Heart right ventricle (tissue), 16 donors: ENCODE measurements at regions of chr1 and their contacts with region 1.

Region 1: GRCh38 chr1:231806623-231807495 is 180.3 kb downstream of the DISC1 start:
- DNase-seq: peak in 1 of 2 donors; percentile 51
- ATAC-seq: peak; percentile 67 to 84 (median 78)
- H3K4me3 ChIP-seq: no peak overlapping the region
- H3K27ac ChIP-seq: no peak overlapping the region
- H3K4me1 ChIP-seq: peaks cover 2 to 33% (median 13%) of the 10 kb centered on the region in 9 donors
- H3K27me3 ChIP-seq: no peaks in the 10 kb centered on the region
- CTCF ChIP-seq: peak; percentile 26 to 71 (median 59)

Region 2: DNA sequence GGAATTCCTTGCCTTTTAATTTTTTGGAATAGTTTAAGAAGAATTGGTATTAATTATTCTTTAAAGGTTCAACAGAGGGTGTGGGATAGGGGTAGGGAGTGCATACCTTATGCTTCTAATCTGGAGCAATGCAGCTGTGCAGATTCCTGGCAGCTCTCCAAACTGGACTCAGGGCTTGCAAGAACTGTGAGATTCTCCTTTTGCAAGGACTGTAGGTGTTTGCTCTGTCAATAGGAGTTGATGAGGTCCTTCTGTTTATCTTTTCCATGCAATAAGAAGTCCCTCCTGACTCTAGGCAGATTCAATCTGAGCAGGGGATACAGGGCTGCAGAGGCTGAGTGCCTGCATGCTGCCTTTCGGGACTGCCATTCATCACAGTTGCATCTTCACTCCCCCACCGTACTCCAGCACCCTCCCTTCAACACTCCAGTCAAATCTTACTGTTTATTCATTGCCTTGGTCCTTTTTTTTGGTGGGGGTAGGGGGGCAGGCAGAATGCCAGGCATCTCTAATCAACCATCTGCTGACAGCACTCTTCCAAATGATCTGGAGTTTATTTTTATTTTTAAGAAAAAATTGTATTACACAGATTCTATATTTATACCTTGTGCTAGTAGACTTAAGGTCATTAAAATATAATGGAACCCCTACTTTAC is 58.0 kb before region 1 on chr1:
- intact Hi-C with region 1: loop called in 1 of 10 experiments (anchors 10 kb)
- DNase-seq: no peak
- ATAC-seq: peak in 1 of 8 donors; percentile 12
- H3K4me3 ChIP-seq: no peak overlapping the region
- H3K27ac ChIP-seq: no peak overlapping the region
- H3K4me1 ChIP-seq: peaks cover 0 to 17% (median 4%) of the 10 kb centered on the region in 9 donors
- H3K27me3 ChIP-seq: no peaks in the 10 kb centered on the region
- CTCF ChIP-seq: no peak

Region 3: DNA sequence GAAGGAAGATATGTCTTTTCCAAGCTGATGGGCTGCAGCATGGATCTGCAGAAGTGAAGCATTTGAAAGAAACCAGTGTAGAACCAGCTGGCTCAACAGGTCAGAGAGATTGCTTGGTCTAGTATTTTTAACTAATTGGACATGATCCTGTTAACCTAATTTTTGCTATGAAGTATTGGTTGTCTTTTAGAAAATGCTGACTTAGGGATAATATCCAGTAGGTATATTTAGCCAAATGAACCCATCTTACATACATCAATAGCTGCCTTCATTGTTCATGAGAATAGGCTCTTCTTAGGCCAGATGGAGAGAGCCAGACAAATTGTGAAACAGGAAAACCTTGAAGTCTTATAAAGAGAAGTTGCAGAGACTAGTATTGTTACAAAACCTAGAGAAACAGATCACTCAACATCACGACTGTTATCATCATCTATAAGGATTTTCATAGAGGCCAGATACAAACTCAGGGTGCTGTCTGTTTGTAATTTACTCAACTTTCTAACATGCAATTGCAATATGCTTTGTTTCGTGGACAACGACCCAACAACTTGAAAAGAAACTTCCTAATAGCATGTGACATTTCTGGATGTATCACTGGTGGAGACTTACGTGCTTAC is 32.0 kb before region 1 on chr1:
- intact Hi-C with region 1: loop called in 1 of 10 experiments (anchors 5 kb)
- DNase-seq: no peak
- ATAC-seq: no peak
- H3K4me3 ChIP-seq: no peak overlapping the region
- H3K27ac ChIP-seq: no peak overlapping the region
- H3K4me1 ChIP-seq: peaks cover 3 to 46% (median 14%) of the 10 kb centered on the region in 9 donors
- H3K27me3 ChIP-seq: no peaks in the 10 kb centered on the region
- CTCF ChIP-seq: no peak